ENCODE measurements at regions of chr15 and their contacts with region 1.

Region 1: DNA sequence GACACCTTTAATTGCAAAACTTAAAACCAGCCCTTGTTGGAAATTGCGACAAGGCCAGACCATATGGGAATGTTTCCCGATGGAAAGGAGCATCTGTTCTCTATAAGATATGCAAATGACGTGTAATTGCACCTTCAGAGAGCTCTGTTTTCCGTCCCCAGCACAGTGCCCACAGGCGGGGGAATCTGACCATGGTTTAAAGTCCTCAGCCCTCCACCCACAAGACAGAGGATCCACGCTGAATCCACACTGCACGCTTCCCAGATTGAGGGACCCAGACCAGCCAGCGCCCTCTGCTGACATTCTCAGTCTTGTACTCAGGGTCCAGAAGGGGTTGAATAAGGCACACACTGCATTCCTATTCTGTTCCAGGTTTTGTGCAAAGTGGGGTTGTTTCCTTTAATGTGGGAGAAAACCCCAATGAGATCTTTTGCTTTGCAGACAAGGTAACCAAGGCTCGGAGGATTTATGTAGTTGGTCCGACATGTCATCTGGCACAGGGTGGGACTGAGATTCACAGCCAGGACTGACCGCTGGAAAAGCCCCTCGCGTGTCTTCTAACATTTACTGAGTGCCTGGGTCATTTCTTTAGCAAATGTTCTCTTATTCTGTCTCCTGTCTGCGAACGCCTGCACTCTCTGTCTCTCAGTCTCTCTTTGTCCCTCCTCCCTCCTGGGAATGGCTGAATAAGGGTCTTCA is 36.8 kb upstream of the KLHL25 start:
- DNase-seq: peak; percentile 59
- H3K4me3 Mint-ChIP-seq: no peak overlapping the region
- H3K27ac Mint-ChIP-seq: no peak overlapping the region
- H3K4me1 Mint-ChIP-seq: no peaks in the 10 kb centered on the region
- H3K27me3 Mint-ChIP-seq: peaks cover 10% of the 10 kb centered on the region
- CTCF ChIP-seq: peak; percentile 40

Region 2: GRCh38 chr15:85494048-85494793 is 337.3 kb before region 1 on chr15:
- CTCF ChIA-PET with region 1: no interaction called
- POLR2A ChIA-PET with region 1: no interaction called
- intact Hi-C with region 1: loop called (anchors 10 kb)
- DNase-seq: peak; percentile 86
- H3K4me3 Mint-ChIP-seq: peak overlapping the region; percentile 25
- H3K27ac Mint-ChIP-seq: peak overlapping the region; percentile 66
- H3K4me1 Mint-ChIP-seq: peaks cover 40% of the 10 kb centered on the region
- H3K27me3 Mint-ChIP-seq: no peaks in the 10 kb centered on the region
- CTCF ChIP-seq: no peak

Region 3: DNA sequence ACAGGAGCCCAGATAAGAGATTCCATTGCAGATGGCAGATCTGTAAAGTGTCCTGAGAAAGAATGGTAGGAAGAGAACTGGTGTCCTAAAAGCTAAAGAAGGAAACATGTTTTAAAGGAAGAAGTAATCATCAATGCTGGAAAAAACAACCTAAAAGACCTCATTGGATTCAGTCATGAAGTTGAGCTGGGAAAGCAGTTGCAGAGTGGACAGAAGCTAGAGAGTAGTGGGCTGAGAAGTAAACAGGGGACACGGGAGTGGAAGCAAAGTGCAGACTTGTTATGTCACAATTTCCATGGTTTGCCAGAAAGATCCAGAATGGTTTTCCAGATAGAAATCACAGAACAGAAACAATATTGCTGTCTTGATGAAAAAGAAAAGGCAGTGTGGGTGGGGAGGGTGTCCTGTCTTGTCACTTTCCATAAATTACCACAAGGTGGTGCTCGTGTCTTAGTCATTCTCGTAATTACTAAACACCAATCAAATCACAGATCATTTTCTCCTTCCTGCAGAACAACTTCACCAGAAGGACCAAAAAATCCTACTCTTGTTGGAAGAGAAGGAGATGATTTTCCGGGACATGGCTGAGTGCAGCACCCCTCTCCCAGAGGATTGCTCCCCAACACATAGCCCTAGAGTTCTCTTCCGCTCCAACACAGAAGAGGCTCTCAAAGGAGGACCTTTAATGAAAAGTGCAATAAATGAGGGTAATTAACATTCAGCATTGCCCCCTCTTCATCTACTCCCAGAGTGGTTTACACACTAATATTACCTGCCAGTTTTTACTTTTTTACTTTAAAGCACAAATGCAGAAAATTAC is 101.4 kb before region 1 on chr15:
- CTCF ChIA-PET with region 1: interaction called, 128 read pairs
- POLR2A ChIA-PET with region 1: no interaction called
- intact Hi-C with region 1: loop called (anchors 2 kb)
- DNase-seq: peak; percentile 75
- H3K4me3 Mint-ChIP-seq: no peak overlapping the region
- H3K27ac Mint-ChIP-seq: no peak overlapping the region
- H3K4me1 Mint-ChIP-seq: peaks cover 26% of the 10 kb centered on the region
- H3K27me3 Mint-ChIP-seq: no peaks in the 10 kb centered on the region
- CTCF ChIP-seq: peak; percentile 72

Region 4: GRCh38 chr15:85742186-85742821 is 89.3 kb before region 1 on chr15:
- CTCF ChIA-PET with region 1: no interaction called
- POLR2A ChIA-PET with region 1: no interaction called
- intact Hi-C with region 1: no loop called
- DNase-seq: no peak
- H3K4me3 Mint-ChIP-seq: no peak overlapping the region
- H3K27ac Mint-ChIP-seq: no peak overlapping the region
- H3K4me1 Mint-ChIP-seq: no peaks in the 10 kb centered on the region
- H3K27me3 Mint-ChIP-seq: no peaks in the 10 kb centered on the region
- CTCF ChIP-seq: no peak

Region 5: GRCh38 chr15:85800467-85801123 is 31.0 kb before region 1 on chr15:
- CTCF ChIA-PET with region 1: interaction called, 4 read pairs
- POLR2A ChIA-PET with region 1: no interaction called
- intact Hi-C with region 1: loop called (anchors 1 kb)
- DNase-seq: peak; percentile 86
- H3K4me3 Mint-ChIP-seq: no peak overlapping the region
- H3K27ac Mint-ChIP-seq: no peak overlapping the region
- H3K4me1 Mint-ChIP-seq: peaks cover 16% of the 10 kb centered on the region
- H3K27me3 Mint-ChIP-seq: no peaks in the 10 kb centered on the region
- CTCF ChIP-seq: peak; percentile 29